H1 (cell line): ENCODE measurements at regions of chr18 and their contacts with region 1.

Region 1: DNA sequence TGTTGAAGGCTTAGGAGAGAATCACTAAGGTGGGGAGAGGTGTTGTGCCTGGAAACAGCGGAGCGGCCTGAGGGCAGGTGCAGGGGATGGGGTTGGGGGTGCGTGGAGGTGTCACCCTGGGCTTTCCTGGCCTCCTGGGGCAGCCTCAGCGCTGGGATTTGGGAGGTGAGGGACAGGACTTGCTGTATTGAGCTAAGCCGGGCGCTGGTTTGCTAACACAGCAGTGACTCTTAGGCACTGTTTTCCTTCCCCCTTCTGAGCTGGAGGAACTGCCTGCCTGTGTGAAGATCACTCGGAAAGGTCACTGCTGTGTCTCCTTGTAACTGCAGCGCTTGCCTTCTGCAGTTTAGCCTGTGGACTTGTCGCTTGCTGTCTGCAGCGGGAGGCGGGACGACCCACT is 21.2 kb downstream of the PRELID3A start:
- DNase-seq: no peak
- H3K4me3 ChIP-seq: no peak overlapping the region
- H3K27ac ChIP-seq: no peak overlapping the region
- H3K4me1 ChIP-seq: peaks cover 0 to 1% (median 0%) of the 10 kb centered on the region in 4 experiments; a peak in 1 of 7 replicates
- H3K27me3 ChIP-seq: peaks cover 0 to 2% (median 0%) of the 10 kb centered on the region in 4 experiments; a peak in 1 of 7 replicates
- CTCF ChIP-seq: no peak
- EP300 ChIP-seq: no peak
- POLR2A ChIP-seq: no peak
- RAD21 ChIP-seq: no peak

Region 2: GRCh38 chr18:12236934-12237832 is 191.7 kb before region 1 on chr18:
- CTCF ChIA-PET with region 1: no interaction called
- POLR2A ChIA-PET with region 1: no interaction called
- DNase-seq: peak in 1 of 2 experiments; percentile 97
- H3K4me3 ChIP-seq: peak overlapping the region in 1 of 4 experiments; percentile 10; a peak in 1 of 8 replicates
- H3K27ac ChIP-seq: no peak overlapping the region
- H3K4me1 ChIP-seq: no peaks in the 10 kb centered on the region; a peak in 1 of 7 replicates
- H3K27me3 ChIP-seq: peaks cover 0 to 2% (median 0%) of the 10 kb centered on the region in 4 experiments; a peak in 1 of 7 replicates
- CTCF ChIP-seq: peak; percentile 94 to 98 (median 95)
- EP300 ChIP-seq: no peak
- POLR2A ChIP-seq: no peak
- RAD21 ChIP-seq: peak; percentile 70 to 80

Region 3: GRCh38 chr18:12441475-12442034 is 12.6 kb after region 1 on chr18:
- CTCF ChIA-PET with region 1: interaction called, 5 read pairs
- POLR2A ChIA-PET with region 1: interaction called, 10 read pairs
- DNase-seq: no peak
- H3K4me3 ChIP-seq: no peak overlapping the region
- H3K27ac ChIP-seq: no peak overlapping the region
- H3K4me1 ChIP-seq: no peaks in the 10 kb centered on the region
- H3K27me3 ChIP-seq: no peaks in the 10 kb centered on the region
- CTCF ChIP-seq: no peak
- EP300 ChIP-seq: no peak
- POLR2A ChIP-seq: no peak
- RAD21 ChIP-seq: no peak